ENCODE measurements at regions of chr10 and their contacts with region 1.

Region 1: GRCh38 chr10:25080880-25081581 is 64.6 kb downstream of the THNSL1 start:
- DNase-seq: peak; percentile 88
- ATAC-seq: peak; percentile 82
- H3K4me3 ChIP-seq: no peak overlapping the region
- H3K27ac ChIP-seq: peak overlapping the region; percentile 37
- H3K4me1 ChIP-seq: peaks cover 72% of the 10 kb centered on the region
- H3K27me3 ChIP-seq: no peaks in the 10 kb centered on the region
- CTCF ChIP-seq: peak; percentile 94
- EP300 ChIP-seq: peak in 1 of 2 experiments; percentile 64; a peak in 2 of 4 replicates
- POLR2A ChIP-seq: no peak
- RAD21 ChIP-seq: peak; percentile 88

Region 2: GRCh38 chr10:24617771-24618391 is 463.1 kb before region 1 on chr10:
- CTCF ChIA-PET with region 1: interaction called, 3 read pairs
- POLR2A ChIA-PET with region 1: no interaction called
- in situ Hi-C with region 1: no loop called
- intact Hi-C with region 1: loop called (anchors 1 kb)
- DNase-seq: peak; percentile 50
- ATAC-seq: peak; percentile 95
- H3K4me3 ChIP-seq: no peak overlapping the region
- H3K27ac ChIP-seq: no peak overlapping the region
- H3K4me1 ChIP-seq: no peaks in the 10 kb centered on the region
- H3K27me3 ChIP-seq: no peaks in the 10 kb centered on the region
- CTCF ChIP-seq: peak; percentile 77
- EP300 ChIP-seq: no peak
- POLR2A ChIP-seq: no peak
- RAD21 ChIP-seq: peak; percentile 69

Region 3: GRCh38 chr10:24724381-24725228 is 356.4 kb before region 1 on chr10:
- CTCF ChIA-PET with region 1: no interaction called
- POLR2A ChIA-PET with region 1: interaction called, 11 read pairs
- in situ Hi-C with region 1: no loop called
- intact Hi-C with region 1: loop called (anchors 1 kb)
- DNase-seq: peak; percentile 94
- ATAC-seq: peak; percentile 81
- H3K4me3 ChIP-seq: peak overlapping the region; percentile 73 to 83 (median 83)
- H3K27ac ChIP-seq: peak overlapping the region; percentile 81
- H3K4me1 ChIP-seq: peaks cover 31% of the 10 kb centered on the region
- H3K27me3 ChIP-seq: no peaks in the 10 kb centered on the region
- CTCF ChIP-seq: no peak
- EP300 ChIP-seq: no peak
- POLR2A ChIP-seq: peak; percentile 87 to 91
- RAD21 ChIP-seq: no peak

Region 4: DNA sequence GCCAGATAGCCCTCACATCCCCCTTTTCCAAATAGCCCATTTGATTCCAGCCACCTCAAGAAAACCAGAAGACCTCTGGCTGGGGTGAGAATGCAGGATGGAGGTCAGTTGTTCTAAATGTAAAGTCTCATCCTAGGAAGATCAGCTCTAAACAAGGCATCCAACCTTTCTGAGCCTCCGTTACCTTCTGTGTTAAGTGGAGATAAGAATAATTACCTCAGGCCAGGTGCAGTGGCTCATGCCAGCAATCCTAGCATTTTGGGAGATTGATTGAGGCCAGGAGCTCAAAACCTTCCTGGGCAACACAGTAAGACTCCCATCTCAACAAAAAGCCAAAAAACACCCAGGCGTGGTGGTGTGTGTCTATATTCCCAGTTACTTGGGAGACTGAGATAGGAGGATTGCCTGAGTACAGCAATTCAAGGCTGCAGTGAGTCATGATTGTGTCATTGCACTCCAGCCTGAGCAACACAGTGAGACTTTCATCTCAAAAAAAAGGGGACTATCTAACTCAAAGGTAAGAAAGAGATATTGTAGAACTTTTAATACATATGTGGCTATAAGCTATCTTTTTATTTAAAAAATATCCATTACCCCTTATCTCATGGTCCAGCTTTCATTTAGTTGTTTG is 172.1 kb before region 1 on chr10:
- CTCF ChIA-PET with region 1: no interaction called
- POLR2A ChIA-PET with region 1: no interaction called
- in situ Hi-C with region 1: no loop called
- intact Hi-C with region 1: loop called (anchors 5 kb)
- DNase-seq: peak; percentile 17
- ATAC-seq: no peak
- H3K4me3 ChIP-seq: no peak overlapping the region
- H3K27ac ChIP-seq: no peak overlapping the region
- H3K4me1 ChIP-seq: no peaks in the 10 kb centered on the region
- H3K27me3 ChIP-seq: no peaks in the 10 kb centered on the region
- CTCF ChIP-seq: no peak
- EP300 ChIP-seq: no peak
- POLR2A ChIP-seq: no peak
- RAD21 ChIP-seq: no peak

Region 5: GRCh38 chr10:25016376-25017154 is 64.5 kb before region 1 on chr10 and contains the start of gene THNSL1:
- CTCF ChIA-PET with region 1: no interaction called
- POLR2A ChIA-PET with region 1: interaction called, 35 read pairs
- in situ Hi-C with region 1: no loop called
- intact Hi-C with region 1: loop called (anchors 1 kb)
- DNase-seq: peak; percentile 97
- ATAC-seq: peak; percentile 99
- H3K4me3 ChIP-seq: peak within 1 kb of the TSS; percentile 64 to 84 (median 71)
- H3K27ac ChIP-seq: peak within 1 kb of the TSS; percentile 100
- H3K4me1 ChIP-seq: peaks cover 32% of the 10 kb centered on the region
- H3K27me3 ChIP-seq: no peaks in the 10 kb centered on the region
- CTCF ChIP-seq: no peak
- EP300 ChIP-seq: no peak; a peak in 1 of 4 replicates
- POLR2A ChIP-seq: peak; percentile 96 to 99
- RAD21 ChIP-seq: peak; percentile 53
- total RNA-seq, gene THNSL1: 3.8 and 7.3 TPM in 2 replicates

Region 6: DNA sequence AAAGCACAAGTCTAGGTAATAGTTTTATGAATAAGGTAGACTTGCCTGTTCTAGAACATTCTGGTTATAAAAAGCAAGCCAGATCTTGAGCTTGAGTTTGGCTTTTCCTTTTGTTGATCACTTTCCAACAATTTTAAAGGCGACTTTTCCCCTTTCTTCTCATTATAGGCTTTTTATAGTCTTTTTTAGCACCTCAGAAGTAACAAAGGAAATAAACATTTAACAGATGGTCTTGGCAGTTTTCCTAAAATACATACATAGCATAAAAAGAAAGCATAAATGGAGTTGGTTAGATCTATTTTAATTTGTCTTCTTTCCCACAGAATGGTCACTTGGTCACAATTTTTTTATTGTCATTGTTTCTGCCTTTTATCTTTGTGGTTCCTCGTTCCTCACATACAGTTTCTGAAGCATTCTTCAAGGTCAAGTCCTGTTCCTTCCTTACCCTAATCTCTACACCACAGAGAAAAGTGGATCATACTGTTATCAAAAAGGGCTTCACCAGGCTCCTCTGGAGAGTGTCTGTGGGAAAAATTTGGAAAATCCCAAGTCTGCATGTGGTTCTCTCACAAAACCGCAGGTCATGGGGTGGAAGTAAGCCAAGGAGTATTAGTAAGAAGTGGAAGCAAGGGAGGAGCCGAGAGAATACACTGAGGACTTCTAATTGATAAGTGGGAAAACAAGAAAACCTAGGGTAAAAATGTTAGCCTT is 33.3 kb before region 1 on chr10:
- CTCF ChIA-PET with region 1: no interaction called
- POLR2A ChIA-PET with region 1: no interaction called
- in situ Hi-C with region 1: no loop called
- intact Hi-C with region 1: loop called (anchors 5 kb)
- DNase-seq: no peak
- ATAC-seq: no peak
- H3K4me3 ChIP-seq: no peak overlapping the region
- H3K27ac ChIP-seq: no peak overlapping the region
- H3K4me1 ChIP-seq: no peaks in the 10 kb centered on the region
- H3K27me3 ChIP-seq: no peaks in the 10 kb centered on the region
- CTCF ChIP-seq: no peak
- EP300 ChIP-seq: no peak
- POLR2A ChIP-seq: no peak
- RAD21 ChIP-seq: no peak

Region 7: GRCh38 chr10:25226775-25227682 is 146.0 kb after region 1 on chr10:
- CTCF ChIA-PET with region 1: no interaction called
- POLR2A ChIA-PET with region 1: no interaction called
- in situ Hi-C with region 1: no loop called
- intact Hi-C with region 1: loop called (anchors 10 kb)
- DNase-seq: peak; percentile 21
- ATAC-seq: peak; percentile 69
- H3K4me3 ChIP-seq: no peak overlapping the region
- H3K27ac ChIP-seq: no peak overlapping the region
- H3K4me1 ChIP-seq: no peaks in the 10 kb centered on the region
- H3K27me3 ChIP-seq: no peaks in the 10 kb centered on the region
- CTCF ChIP-seq: peak; percentile 78
- EP300 ChIP-seq: no peak
- POLR2A ChIP-seq: no peak
- RAD21 ChIP-seq: 0 out of 2 replicates have a peak, but pooled peaks have one; percentile 32